ENCODE measurements at regions of chr1 and their contacts with region 1.

Region 1: DNA sequence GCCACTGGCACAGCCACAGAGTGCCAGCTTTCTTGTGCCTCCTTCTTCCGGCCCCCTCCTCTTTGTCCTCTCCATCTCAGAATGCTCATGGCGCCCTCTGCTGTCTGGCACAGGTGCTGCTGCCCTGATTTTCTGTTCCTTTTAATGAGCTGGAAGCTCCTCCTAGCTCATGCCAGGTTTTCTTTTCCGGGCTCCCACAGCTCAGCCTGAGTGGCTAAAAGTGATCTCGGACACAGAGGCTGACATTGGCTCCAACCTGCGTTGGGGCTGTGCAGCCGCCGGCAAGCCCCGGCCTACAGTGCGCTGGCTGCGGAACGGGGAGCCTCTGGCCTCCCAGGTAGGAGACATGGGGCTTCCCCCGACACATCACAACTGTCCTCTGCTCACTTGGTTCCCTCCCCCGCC is 18.7 kb downstream of the CNTN2 start:
- DNase-seq: peak; percentile 91

Region 2: DNA sequence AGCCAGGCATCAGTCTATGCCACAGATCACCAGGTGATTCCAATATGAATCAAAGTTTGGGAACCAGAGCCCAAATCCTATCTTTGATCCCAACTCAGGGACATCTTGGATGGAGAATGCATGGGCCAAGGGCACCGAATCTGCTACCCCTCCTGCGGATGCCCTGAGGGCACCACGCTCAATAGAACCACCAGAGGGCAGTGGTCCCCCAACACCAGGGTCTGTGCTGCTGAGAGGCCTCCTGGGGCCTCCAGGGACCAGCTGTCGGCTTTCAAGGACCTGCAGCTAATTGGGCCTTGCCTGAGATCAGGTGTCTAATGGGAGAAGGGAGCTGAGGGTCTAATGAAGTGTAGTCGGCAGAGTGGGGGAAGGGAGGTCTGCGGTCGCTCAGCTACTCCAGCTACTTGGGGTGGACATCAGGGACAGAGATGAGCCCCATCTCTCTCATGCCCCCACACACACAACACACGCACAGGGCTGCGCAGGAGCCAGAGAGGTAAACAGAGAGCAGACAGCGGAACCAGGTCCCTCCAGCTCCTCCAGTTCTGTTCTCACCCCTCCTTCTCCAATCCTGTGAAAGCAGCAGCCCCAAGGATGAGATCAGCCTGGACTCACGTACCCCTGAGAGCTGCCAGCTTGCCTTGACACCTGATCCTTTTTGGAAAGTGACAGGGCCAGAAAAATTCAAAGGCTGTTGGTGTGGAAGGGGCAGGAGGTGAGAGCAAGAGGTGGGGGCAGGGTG is 615.1 kb before region 1 on chr1:
- in situ Hi-C with region 1: no loop called
- DNase-seq: peak; percentile 71

Region 3: GRCh38 chr1:204806943-204807687 is 254.6 kb before region 1 on chr1:
- in situ Hi-C with region 1: loop called (anchors 25 kb)
- DNase-seq: peak; percentile 94

Region 4: GRCh38 chr1:204997591-204998355 is 63.9 kb before region 1 on chr1:
- in situ Hi-C with region 1: no loop called
- DNase-seq: no peak

Region 5: DNA sequence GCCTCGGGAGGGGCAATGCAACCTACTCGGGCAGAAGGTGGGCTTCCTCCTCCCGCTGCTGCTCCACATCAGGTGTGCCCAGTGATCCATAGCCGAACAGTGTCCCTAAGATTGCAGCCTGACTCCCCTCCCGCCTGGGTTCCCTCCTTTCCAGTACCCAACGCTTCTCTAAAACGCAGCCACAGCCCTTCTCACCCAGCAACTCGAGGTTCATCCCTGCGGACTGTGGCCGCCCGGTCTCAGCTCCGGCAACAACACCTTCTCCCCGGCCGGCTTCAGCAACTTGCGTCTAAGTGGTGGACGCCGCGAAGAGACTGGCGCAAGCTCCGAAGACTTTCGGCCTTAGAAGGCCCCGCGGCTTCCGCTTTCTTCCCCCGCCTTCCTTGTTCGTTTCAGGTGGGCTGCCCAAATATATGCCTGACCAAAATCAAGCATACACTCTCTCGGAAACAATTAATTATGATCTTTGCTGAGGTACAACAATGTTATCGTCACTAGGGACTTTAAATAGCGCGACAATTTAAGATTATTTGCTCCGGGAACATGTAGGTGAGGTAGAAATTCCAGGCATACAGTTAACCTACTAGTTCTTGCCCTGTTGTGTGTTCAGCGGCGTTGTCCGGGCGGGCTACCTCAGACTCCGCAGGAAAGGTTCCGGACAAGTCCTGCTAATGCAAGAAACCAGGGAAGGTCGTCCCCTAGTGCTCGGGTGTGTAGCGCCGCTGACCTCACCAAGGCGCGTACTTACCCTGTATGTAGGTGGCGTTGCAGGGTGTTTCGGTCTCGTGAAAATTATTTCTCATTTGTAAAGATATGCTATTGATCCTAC is 60.2 kb after region 1 on chr1 and contains the start of gene RBBP5:
- in situ Hi-C with region 1: loop called (anchors 10 kb)
- DNase-seq: peak; percentile 97

Region 6: GRCh38 chr1:205275133-205275532 is 213.5 kb after region 1 on chr1:
- in situ Hi-C with region 1: no loop called
- DNase-seq: no peak

Measured in KBM-7 (cell line).